ENCODE measurements at regions of chr11 and their contacts with region 1.

Region 1: DNA sequence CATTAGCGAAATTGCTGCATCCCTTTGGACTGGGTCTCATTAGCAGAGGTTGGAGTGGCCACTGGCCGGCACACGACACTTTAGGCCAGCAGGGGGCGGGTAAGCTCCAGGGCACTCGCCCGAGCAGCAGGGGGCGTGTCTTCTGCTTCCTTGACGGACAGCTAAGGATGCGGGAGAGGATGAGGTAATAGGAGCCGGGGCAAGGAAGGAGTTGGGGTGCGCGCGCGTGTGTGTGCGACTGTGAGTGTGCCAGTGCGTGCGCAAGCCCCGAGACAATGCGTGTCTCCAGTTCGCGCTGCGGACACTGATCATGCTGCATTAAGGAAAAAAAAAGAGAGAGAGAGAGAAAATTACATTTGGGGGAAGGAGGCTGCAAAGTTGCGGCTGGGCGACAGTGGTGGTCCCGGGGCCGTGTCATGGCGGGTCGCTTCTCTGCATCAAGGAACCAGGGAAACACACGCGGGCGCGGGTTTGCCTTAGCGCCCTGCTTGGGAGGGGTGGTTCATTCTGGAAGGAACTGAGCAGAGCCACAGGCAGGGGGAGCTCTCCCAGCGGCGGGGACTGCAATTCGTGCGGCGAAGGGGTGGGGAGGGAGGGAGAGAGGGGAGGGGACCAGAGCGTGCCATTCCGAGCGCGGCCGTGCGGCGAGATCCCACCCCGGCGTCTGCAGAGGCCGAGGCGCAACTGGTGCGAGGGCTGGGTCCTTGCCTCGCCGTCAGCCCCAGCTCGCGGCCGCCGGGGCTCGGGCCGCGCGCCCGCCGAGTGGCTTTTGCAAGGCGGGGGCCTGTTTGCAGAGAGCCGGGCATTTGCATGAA is at the start of gene DTX4:
- DNase-seq: peak; percentile 76
- H3K4me3 ChIP-seq: peak within 1 kb of the TSS; percentile 71
- H3K27ac ChIP-seq: no peak within 1 kb of the TSS
- H3K27me3 ChIP-seq: peaks cover 3% of the 10 kb centered on the region
- CTCF ChIP-seq: peak; percentile 79
- polyA plus RNA-seq, gene DTX4: 1.4 and 2.2 TPM in 2 replicates

Region 2: DNA sequence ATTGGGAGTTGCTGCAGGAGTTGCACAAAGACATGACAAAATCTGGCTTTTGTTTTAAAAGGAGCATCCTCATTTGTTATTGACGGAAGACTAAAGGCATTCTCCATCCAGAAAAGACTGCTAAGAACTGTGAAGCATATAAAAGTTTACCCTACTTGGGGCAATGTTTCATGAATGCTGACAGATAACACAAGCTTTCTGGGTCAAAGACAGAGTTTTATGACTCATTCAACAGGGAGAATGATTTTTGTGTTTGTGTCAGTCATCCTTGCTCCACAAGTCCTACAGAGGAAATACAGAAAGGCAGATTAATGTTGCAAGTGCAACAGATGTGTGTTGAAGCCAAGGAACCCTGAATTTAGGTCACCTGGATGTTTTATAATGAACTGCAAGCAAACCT is 229.9 kb before region 1 on chr11:
- CTCF ChIA-PET with region 1: no interaction called
- POLR2A ChIA-PET with region 1: no interaction called
- DNase-seq: no peak
- H3K4me3 ChIP-seq: no peak overlapping the region
- H3K27ac ChIP-seq: no peak overlapping the region
- H3K27me3 ChIP-seq: no peaks in the 10 kb centered on the region
- CTCF ChIP-seq: no peak

Region 3: DNA sequence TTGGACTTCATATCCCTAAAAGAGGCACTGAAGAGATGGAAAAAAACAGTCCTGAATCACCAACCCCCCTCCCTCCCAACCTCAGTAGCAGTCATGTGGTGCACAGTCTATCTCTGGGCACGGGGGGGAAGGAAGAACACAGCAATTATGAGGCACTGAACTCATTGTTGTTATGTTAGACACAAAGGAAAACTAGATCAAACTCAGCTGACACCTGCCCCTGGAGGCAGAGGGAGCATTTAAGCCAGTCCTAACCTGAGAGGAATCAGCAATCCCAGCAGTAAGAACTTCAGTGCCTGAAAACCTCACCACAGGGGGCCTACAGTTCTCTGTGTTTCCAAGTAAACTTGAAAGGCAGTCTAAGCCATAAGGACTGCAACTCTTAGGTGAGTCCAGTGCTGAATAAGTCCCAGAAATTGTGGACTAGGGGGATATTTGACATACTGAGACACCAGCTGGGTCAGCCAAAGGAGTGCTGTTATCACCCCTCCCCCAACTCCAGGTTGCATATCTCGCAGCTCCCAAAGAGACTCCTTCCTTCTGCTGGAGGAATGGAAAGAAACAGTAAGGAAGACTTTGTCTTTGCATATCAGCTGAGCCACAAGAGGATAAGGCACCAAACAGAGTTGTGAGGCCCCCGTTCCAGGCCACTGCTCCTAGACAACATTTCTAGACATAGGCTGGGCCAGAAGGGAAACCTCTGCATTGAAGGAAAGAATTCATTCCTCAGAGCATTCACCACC is 159.9 kb before region 1 on chr11:
- CTCF ChIA-PET with region 1: no interaction called
- POLR2A ChIA-PET with region 1: no interaction called
- DNase-seq: no peak
- H3K4me3 ChIP-seq: no peak overlapping the region
- H3K27ac ChIP-seq: no peak overlapping the region
- H3K27me3 ChIP-seq: peaks cover 2% of the 10 kb centered on the region
- CTCF ChIP-seq: no peak

Region 4: DNA sequence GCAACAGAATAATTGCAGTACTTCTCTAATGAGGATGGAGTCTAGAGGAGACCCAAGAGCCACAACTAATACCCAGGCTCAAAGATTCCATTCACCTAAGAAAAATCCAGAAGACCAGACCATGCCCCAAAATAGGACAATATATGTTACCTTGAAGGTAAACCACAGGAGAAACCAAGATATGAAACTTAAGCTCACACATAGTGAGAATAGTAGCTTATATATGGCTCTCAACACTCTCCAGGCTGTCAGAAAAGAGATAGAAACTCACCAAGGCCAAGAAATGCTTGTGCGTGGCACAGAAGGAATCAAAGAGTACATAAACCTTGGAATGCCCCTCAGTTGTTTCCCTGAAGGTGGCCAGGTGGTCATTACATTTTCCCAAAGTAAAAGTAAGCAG is 20.0 kb before region 1 on chr11:
- CTCF ChIA-PET with region 1: interaction called, 65 read pairs
- POLR2A ChIA-PET with region 1: no interaction called
- DNase-seq: no peak
- H3K4me3 ChIP-seq: no peak overlapping the region
- H3K27ac ChIP-seq: no peak overlapping the region
- H3K27me3 ChIP-seq: no peaks in the 10 kb centered on the region
- CTCF ChIP-seq: no peak

Region 5: GRCh38 chr11:59186130-59186594 is 14.4 kb after region 1 on chr11:
- CTCF ChIA-PET with region 1: interaction called, 151 read pairs
- POLR2A ChIA-PET with region 1: interaction called, 8 read pairs
- DNase-seq: no peak
- H3K4me3 ChIP-seq: no peak overlapping the region
- H3K27ac ChIP-seq: no peak overlapping the region
- H3K27me3 ChIP-seq: no peaks in the 10 kb centered on the region
- CTCF ChIP-seq: peak; percentile 59

Region 6: DNA sequence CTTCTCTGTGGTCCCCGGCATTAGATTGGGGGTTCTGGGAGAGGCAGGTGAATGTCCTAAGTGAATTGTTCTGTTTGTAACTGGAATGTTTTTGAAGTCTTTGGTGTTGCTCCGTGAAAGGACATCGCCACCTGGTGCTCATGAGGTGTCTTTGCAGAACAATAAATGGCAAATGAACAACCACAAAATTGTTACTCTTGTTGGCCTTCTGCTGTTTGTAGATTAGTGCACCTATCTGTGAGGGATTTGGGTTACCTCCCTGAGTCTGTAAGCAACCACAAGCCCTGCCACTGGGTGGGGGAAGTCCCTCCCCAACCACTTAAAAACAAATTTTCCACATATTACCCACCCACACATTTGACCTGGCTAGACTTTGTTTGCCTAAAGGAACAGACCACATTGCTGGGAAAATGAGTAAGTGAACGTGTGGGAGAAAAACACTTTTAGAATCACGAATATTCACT is 36.3 kb after region 1 on chr11:
- CTCF ChIA-PET with region 1: interaction called, 123 read pairs
- POLR2A ChIA-PET with region 1: interaction called, 3 read pairs
- DNase-seq: peak; percentile 43
- H3K4me3 ChIP-seq: no peak overlapping the region
- H3K27ac ChIP-seq: no peak overlapping the region
- H3K27me3 ChIP-seq: peaks cover 30% of the 10 kb centered on the region
- CTCF ChIP-seq: peak; percentile 75

Region 7: GRCh38 chr11:59283825-59284772 is 112.4 kb after region 1 on chr11:
- CTCF ChIA-PET with region 1: interaction called, 22 read pairs
- POLR2A ChIA-PET with region 1: no interaction called
- DNase-seq: peak; percentile 34
- H3K4me3 ChIP-seq: no peak overlapping the region
- H3K27ac ChIP-seq: no peak overlapping the region
- H3K27me3 ChIP-seq: peaks cover 11% of the 10 kb centered on the region
- CTCF ChIP-seq: peak; percentile 85